Caco-2 (cell line): ENCODE measurements at regions of chr2 and their contacts with region 1.

Region 1: DNA sequence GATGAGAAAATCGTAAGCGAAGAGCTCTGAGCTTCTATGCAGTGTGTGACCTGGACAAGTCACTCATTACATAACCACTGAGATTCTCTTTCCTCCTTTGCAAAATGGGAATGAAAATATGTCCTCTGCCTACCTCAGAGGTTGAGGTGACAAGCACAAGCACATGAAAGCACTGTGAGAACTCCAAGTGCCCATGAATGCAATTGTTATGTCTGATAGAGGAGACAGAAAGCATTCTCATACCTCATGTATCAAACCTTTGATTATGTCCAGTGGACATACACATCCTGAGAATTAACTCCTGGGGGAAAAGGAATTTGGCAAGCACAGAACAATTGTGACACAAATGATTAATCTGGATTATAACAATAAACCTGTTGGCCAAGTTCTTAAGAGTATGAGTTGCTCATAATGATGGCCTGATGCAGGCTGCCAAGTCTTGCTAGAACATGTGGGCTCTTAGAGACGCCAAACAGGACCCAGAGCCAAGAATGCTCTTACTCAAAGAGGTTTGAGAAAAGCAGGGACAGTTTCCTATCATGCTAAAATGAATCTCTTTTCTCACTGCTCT is 8.5 kb upstream of the RMDN2 start:
- DNase-seq: no peak
- H3K4me3 ChIP-seq: no peak overlapping the region
- H3K4me3 Mint-ChIP-seq: no peak overlapping the region
- H3K27ac Mint-ChIP-seq: no peak overlapping the region
- H3K4me1 ChIP-seq: peaks cover 28% of the 10 kb centered on the region
- H3K4me1 Mint-ChIP-seq: peaks cover 7% of the 10 kb centered on the region
- H3K27me3 ChIP-seq: no peaks in the 10 kb centered on the region
- H3K27me3 Mint-ChIP-seq: no peaks in the 10 kb centered on the region
- CTCF ChIP-seq: no peak

Region 2: GRCh38 chr2:37902991-37903390 is 13.6 kb before region 1 on chr2:
- CTCF ChIA-PET with region 1: no interaction called
- POLR2A ChIA-PET with region 1: no interaction called
- intact Hi-C with region 1: loop called (anchors 2 kb)
- DNase-seq: no peak
- H3K4me3 ChIP-seq: no peak overlapping the region
- H3K4me3 Mint-ChIP-seq: no peak overlapping the region
- H3K27ac Mint-ChIP-seq: no peak overlapping the region
- H3K4me1 ChIP-seq: peaks cover 9% of the 10 kb centered on the region
- H3K4me1 Mint-ChIP-seq: peaks cover 8% of the 10 kb centered on the region
- H3K27me3 ChIP-seq: no peaks in the 10 kb centered on the region
- H3K27me3 Mint-ChIP-seq: no peaks in the 10 kb centered on the region
- CTCF ChIP-seq: no peak